Cardiac septum (tissue), 1 donor: ENCODE measurements at regions of chr19 and their contacts with region 1.

Region 1: DNA sequence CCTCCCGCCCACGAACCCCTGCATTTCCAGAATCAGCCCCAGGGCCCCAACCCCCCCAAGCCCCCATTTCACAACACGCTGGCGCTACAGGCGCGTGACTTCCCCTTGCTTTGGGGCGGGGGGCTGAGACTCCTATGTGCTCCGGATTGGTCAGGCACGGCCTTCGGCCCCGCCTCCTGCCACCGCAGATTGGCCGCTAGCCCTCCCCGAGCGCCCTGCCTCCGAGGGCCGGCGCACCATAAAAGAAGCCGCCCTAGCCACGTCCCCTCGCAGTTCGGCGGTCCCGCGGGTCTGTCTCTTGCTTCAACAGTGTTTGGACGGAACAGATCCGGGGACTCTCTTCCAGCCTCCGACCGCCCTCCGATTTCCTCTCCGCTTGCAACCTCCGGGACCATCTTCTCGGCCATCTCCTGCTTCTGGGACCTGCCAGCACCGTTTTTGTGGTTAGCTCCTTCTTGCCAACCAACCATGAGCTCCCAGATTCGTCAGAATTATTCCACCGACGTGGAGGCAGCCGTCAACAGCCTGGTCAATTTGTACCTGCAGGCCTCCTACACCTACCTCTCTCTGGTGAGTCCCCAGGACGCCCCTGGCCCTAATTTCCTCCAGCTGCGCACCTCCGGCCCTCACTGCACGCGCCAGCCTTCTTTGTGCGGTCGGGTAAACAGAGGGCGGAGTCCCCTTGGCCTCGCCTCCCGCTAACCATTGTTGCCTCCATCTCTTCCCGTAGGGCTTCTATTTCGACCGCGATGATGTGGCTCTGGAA is at the start of gene FTL:
- DNase-seq: peak; percentile 99
- total RNA-seq, gene FTL: 827 TPM

Region 2: GRCh38 chr19:48795055-48795684 is 170.1 kb before region 1 on chr19:
- intact Hi-C with region 1: loop called (anchors 5 kb)
- DNase-seq: peak; percentile 95

Region 3: DNA sequence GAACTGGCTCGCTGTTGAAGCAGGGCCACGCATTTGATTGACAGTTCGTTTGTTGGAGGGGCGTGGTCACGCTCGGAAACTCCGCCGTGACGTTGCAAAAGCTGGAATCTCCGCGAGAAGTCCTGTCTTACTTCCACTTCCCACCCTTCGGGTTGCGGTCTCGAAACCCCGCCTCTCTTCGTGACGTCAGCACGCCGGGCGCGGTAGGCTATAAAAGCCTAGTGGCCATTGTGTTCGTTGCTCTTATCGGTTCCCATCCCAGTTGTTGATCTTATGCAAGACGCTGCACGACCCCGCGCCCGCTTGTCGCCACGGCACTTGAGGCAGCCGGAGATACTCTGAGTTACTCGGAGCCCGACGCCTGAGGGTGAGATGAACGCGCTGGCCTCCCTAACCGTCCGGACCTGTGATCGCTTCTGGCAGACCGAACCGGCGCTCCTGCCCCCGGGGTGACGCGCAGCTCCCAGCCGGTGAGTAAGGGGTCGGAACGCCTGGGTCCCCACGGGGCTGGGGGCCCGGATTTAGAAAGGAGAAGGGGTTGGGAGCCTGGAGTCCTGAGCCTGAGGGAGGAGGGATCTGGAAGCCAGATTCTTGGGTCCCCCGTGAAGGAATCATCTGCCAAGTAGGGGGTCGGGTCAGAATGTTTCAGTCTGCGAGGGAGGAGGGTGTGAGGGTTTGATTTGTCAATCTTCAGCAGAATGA is 92.9 kb before region 1 on chr19 and contains the start of gene PPP1R15A:
- intact Hi-C with region 1: loop called (anchors 2 kb)
- DNase-seq: peak; percentile 100
- total RNA-seq, gene PPP1R15A: 87.0 TPM

Region 4: GRCh38 chr19:48899781-48900476 is 65.3 kb before region 1 on chr19 and contains the start of gene NUCB1:
- intact Hi-C with region 1: loop called (anchors 2 kb)
- DNase-seq: peak; percentile 100
- total RNA-seq, gene NUCB1: 276 TPM

Region 5: GRCh38 chr19:48954595-48955310 is 10.5 kb before region 1 on chr19 and contains the start of gene BAX:
- intact Hi-C with region 1: loop called (anchors 1 kb)
- DNase-seq: peak; percentile 98
- total RNA-seq, gene BAX: 25.6 TPM